Naive thymus-derived CD4-positive, alpha-beta T cell (primary cell): ENCODE measurements at regions of chr18 and their contacts with region 1.

Region 1: GRCh38 chr18:63422087-63422809 is at the start of gene VPS4B:
- DNase-seq: peak; percentile 99 to 100 (median 99)
- ATAC-seq: peak; percentile 97
- H3K4me3 ChIP-seq: peak within 1 kb of the TSS; percentile 96
- H3K4me3 Mint-ChIP-seq: peak within 1 kb of the TSS; percentile 88 to 100 (median 97)
- H3K27ac ChIP-seq: peak within 1 kb of the TSS; percentile 95
- H3K27ac Mint-ChIP-seq: peak within 1 kb of the TSS; percentile 94 to 100 (median 98)
- H3K4me1 ChIP-seq: peaks cover 17 to 22% of the 10 kb centered on the region in 2 donors
- H3K4me1 Mint-ChIP-seq: peaks cover 6 to 34% (median 26%) of the 10 kb centered on the region in 7 donors
- H3K27me3 ChIP-seq: no peaks in the 10 kb centered on the region
- H3K27me3 Mint-ChIP-seq: peaks cover 0 to 5% (median 2%) of the 10 kb centered on the region in 5 donors
- total RNA-seq, gene VPS4B: 48.2 to 84.6 (median 74.9) TPM

Region 2: GRCh38 chr18:62584241-62585120 is 837.8 kb before region 1 on chr18:
- CTCF ChIA-PET with region 1: no interaction called
- POLR2A ChIA-PET with region 1: no interaction called
- intact Hi-C with region 1: loop called in 1 of 2 experiments (anchors 5 kb)
- DNase-seq: peak; percentile 61 to 85 (median 82)
- ATAC-seq: peak; percentile 99
- H3K4me3 ChIP-seq: no peak overlapping the region
- H3K4me3 Mint-ChIP-seq: peak overlapping the region; percentile 18 to 65 (median 58)
- H3K27ac ChIP-seq: no peak overlapping the region
- H3K27ac Mint-ChIP-seq: peak overlapping the region; percentile 26 to 83 (median 72)
- H3K4me1 ChIP-seq: peaks cover 18 to 22% of the 10 kb centered on the region in 2 donors
- H3K4me1 Mint-ChIP-seq: peaks cover 17 to 50% (median 32%) of the 10 kb centered on the region in 7 donors
- H3K27me3 ChIP-seq: no peaks in the 10 kb centered on the region
- H3K27me3 Mint-ChIP-seq: no peaks in the 10 kb centered on the region

Region 3: GRCh38 chr18:63131106-63131958 is 290.9 kb before region 1 on chr18:
- CTCF ChIA-PET with region 1: no interaction called
- POLR2A ChIA-PET with region 1: no interaction called
- intact Hi-C with region 1: loop called in 1 of 2 experiments (anchors 5 kb)
- DNase-seq: peak in 7 of 9 donors; percentile 51 to 71 (median 69)
- ATAC-seq: peak; percentile 80
- H3K4me3 ChIP-seq: no peak overlapping the region
- H3K4me3 Mint-ChIP-seq: peak overlapping the region in 9 of 10 donors; percentile 13 to 81 (median 45)
- H3K27ac ChIP-seq: peak overlapping the region; percentile 61
- H3K27ac Mint-ChIP-seq: peak overlapping the region in 8 of 9 donors; percentile 36 to 94 (median 83)
- H3K4me1 ChIP-seq: peaks cover 9 to 18% of the 10 kb centered on the region in 2 donors
- H3K4me1 Mint-ChIP-seq: peaks cover 28 to 58% (median 50%) of the 10 kb centered on the region in 7 donors
- H3K27me3 ChIP-seq: no peaks in the 10 kb centered on the region
- H3K27me3 Mint-ChIP-seq: no peaks in the 10 kb centered on the region

Region 4: GRCh38 chr18:63216516-63217311 is 205.5 kb before region 1 on chr18:
- CTCF ChIA-PET with region 1: no interaction called
- POLR2A ChIA-PET with region 1: no interaction called
- intact Hi-C with region 1: loop called in 1 of 2 experiments (anchors 5 kb)
- DNase-seq: peak in 7 of 9 donors; percentile 34 to 62 (median 49)
- ATAC-seq: peak; percentile 73
- H3K4me3 ChIP-seq: peak overlapping the region; percentile 25
- H3K4me3 Mint-ChIP-seq: peak overlapping the region; percentile 54 to 89 (median 78)
- H3K27ac ChIP-seq: peak overlapping the region; percentile 63
- H3K27ac Mint-ChIP-seq: peak overlapping the region; percentile 70 to 94 (median 90)
- H3K4me1 ChIP-seq: peaks cover 58 to 75% of the 10 kb centered on the region in 2 donors
- H3K4me1 Mint-ChIP-seq: peaks cover 71 to 99% (median 93%) of the 10 kb centered on the region in 7 donors
- H3K27me3 ChIP-seq: no peaks in the 10 kb centered on the region
- H3K27me3 Mint-ChIP-seq: no peaks in the 10 kb centered on the region

Region 5: GRCh38 chr18:63410792-63411191 is 11.5 kb before region 1 on chr18:
- CTCF ChIA-PET with region 1: no interaction called
- POLR2A ChIA-PET with region 1: interaction called, 12 read pairs
- intact Hi-C with region 1: loop called in 1 of 2 experiments (anchors 1 kb)
- DNase-seq: no peak
- ATAC-seq: no peak
- H3K4me3 ChIP-seq: no peak overlapping the region
- H3K4me3 Mint-ChIP-seq: peak overlapping the region in 1 of 10 donors; percentile 30
- H3K27ac ChIP-seq: no peak overlapping the region
- H3K27ac Mint-ChIP-seq: peak overlapping the region in 4 of 9 donors; percentile 5 to 68 (median 52)
- H3K4me1 ChIP-seq: peaks cover 9% of the 10 kb centered on the region in 2 donors
- H3K4me1 Mint-ChIP-seq: peaks cover 19 to 70% (median 51%) of the 10 kb centered on the region in 7 donors
- H3K27me3 ChIP-seq: no peaks in the 10 kb centered on the region
- H3K27me3 Mint-ChIP-seq: no peaks in the 10 kb centered on the region